Activated naive CD8-positive, alpha-beta T cell treated with anti-CD3 and anti-CD28 coated beads, Interleukin-2, amount 10 ng/mL, durations not matched to agents 7 days and 5 days (primary cell): ENCODE measurements at regions of chr14 and their contacts with region 1.

Region 1: DNA sequence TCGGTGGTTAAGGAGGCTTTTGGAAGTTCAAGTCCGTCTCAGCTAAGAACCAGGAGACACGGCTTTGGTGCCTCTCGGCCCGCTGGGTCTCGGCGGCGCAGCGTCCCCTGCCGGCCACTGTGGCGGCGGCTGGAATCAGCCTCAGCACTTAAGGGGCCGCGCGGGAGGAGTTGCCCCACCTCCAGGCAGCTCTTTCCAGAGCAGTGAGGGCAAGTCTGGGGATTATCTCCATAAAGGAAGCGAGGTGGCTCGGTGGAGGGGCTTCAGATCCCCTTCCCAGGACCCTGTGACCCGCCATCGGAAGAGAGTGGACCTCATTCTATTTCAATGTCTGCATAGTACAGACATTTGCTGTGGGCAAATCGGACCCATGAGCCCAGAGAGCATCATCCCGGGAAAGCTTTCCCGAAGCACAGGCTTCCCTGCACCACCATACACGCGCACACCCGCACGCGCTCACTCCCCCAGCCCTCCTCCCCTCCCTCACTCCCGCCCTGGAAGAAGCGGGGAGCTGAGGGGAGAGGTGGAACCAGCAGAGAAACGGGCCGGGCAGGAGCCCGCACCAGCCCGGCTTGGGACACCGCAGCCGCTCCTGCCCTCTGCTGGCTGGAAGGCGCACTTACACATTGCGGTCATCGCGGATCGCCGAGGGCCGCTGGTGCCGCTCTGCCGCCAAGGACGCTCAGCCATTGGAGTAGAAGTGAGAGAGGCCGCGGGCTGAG is 15.9 kb downstream of the RNASE2 start:
- DNase-seq: peak; percentile 86
- ATAC-seq: peak; percentile 89
- H3K4me3 Mint-ChIP-seq: peak overlapping the region; percentile 90
- H3K27ac Mint-ChIP-seq: no peak overlapping the region
- H3K4me1 Mint-ChIP-seq: peaks cover 8% of the 10 kb centered on the region
- H3K27me3 Mint-ChIP-seq: peaks cover 40% of the 10 kb centered on the region

Region 2: DNA sequence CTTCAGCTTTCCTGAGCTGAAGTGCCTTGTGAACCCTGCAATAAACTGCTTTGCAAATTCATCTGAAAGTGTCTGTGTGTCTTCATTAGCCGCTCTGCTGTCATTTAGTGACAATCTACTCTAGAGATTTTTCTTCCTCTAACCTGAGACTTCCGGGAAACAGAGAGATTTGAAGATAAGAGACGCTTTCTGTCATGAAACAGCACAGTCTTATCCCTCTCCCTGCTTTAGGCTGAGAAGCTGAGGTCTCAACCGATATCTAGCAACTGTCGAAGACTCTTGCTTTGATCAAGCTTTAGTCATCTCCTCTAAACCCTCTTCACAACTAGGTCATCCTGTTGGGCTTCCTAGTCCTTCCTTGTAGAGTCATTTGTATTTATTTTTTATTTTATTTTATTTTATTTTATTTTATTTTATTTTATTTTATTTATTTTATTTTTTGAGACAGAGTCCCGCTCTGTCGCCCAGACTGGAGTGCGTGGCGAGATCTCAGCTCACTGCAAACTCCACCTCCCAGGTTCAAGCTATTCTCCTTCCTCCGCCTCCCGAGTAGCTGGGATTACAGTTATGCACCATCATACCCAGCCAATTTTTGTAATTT is 14.7 kb before region 1 on chr14:
- POLR2A ChIA-PET with region 1: interaction called, 10 read pairs
- DNase-seq: no peak
- ATAC-seq: no peak
- H3K4me3 Mint-ChIP-seq: peak overlapping the region; percentile 18
- H3K27ac Mint-ChIP-seq: no peak overlapping the region
- H3K4me1 Mint-ChIP-seq: peaks cover 19% of the 10 kb centered on the region
- H3K27me3 Mint-ChIP-seq: peaks cover 17% of the 10 kb centered on the region

Region 3: DNA sequence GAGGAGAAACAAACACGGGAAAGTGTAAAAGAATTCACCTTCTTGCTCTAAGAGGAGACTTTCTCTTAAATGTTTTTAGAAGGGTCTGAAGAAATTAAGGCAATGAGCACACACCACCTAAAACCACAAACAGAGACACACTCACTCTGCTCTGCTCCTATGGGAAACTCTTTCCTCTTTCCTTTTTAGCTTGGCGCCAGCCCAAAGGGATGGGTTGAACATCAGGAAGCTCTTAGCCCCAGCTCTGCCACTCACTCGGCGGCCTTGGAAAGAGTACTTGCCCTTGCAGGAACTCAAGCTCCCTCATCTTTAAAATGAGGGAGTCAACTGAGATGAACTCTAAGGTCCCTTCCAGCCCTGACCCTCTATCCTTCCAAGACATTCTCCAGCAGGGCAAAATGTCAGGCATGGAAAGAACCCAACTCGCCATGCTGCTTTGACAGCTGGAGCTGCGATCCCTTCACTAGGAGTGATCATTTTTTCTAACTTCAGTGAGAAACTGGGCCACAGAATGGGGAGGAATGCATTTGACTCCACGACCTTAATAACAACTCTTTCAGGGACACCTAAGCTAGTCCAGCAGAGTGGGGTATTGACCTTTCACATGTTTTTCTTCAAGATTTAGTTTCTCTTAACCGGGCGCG is 85.5 kb after region 1 on chr14:
- POLR2A ChIA-PET with region 1: no interaction called
- DNase-seq: no peak
- ATAC-seq: no peak
- H3K4me3 Mint-ChIP-seq: no peak overlapping the region
- H3K27ac Mint-ChIP-seq: no peak overlapping the region
- H3K4me1 Mint-ChIP-seq: peaks cover 5% of the 10 kb centered on the region
- H3K27me3 Mint-ChIP-seq: peaks cover 16% of the 10 kb centered on the region